AG04450 (cell line): ENCODE measurements at regions of chr7 and their contacts with region 1.

Region 1: GRCh38 chr7:22103255-22103969 is 157.7 kb upstream of the CDCA7L start:
- DNase-seq: peak; percentile 39
- H3K4me3 ChIP-seq: no peak overlapping the region
- H3K27ac ChIP-seq: no peak overlapping the region
- H3K27me3 ChIP-seq: peaks cover 9% of the 10 kb centered on the region
- CTCF ChIP-seq: peak; percentile 91

Region 2: GRCh38 chr7:22001345-22002004 is 101.9 kb before region 1 on chr7:
- CTCF ChIA-PET with region 1: no interaction called
- POLR2A ChIA-PET with region 1: no interaction called
- DNase-seq: peak; percentile 16
- H3K4me3 ChIP-seq: no peak overlapping the region
- H3K27ac ChIP-seq: no peak overlapping the region
- H3K27me3 ChIP-seq: peaks cover 2% of the 10 kb centered on the region
- CTCF ChIP-seq: peak; percentile 83

Region 3: DNA sequence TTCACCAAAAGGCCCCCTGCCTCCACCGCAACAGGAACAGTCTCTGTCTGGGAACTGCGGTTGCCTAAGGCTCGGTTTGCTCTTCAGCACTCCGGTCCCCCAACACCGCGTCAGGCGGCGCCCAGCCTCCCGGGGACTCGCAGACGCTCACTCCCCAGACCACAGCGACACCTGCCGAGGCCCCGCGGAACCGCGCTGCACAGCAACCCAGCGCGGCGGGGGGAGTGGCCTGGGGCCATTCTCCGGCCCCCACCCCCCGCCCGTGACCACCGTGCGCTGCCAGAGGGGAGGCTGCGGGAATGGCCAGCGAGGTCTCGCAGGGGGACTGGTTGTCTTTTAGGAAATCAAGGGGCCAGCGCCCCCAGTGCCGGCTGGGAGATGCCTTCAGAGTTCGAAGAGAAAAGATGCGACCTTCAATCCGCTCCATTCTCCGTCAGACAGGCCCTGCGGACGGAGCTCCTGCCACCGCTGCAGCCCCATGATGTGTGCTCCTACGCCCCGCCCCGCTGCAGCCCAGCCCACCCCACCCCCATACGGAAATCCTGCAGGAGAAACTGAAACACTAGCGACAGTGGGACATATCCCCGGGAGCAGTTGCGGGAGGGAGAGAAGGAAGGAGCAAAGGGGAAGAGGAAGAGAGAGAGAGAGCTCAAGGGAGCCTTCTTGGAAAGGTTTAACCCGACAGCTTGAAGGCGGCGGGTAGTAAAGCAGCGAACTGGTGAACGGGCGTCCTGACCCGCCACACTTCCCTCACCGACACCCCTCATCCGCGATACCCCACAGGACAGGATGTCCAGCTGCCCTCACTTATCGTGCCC is 20.3 kb before region 1 on chr7:
- CTCF ChIA-PET with region 1: interaction called, 33 read pairs
- POLR2A ChIA-PET with region 1: no interaction called
- DNase-seq: peak; percentile 44
- H3K4me3 ChIP-seq: peak overlapping the region; percentile 86
- H3K27ac ChIP-seq: peak overlapping the region; percentile 75
- H3K27me3 ChIP-seq: peaks cover 8% of the 10 kb centered on the region
- CTCF ChIP-seq: peak; percentile 92

Region 4: DNA sequence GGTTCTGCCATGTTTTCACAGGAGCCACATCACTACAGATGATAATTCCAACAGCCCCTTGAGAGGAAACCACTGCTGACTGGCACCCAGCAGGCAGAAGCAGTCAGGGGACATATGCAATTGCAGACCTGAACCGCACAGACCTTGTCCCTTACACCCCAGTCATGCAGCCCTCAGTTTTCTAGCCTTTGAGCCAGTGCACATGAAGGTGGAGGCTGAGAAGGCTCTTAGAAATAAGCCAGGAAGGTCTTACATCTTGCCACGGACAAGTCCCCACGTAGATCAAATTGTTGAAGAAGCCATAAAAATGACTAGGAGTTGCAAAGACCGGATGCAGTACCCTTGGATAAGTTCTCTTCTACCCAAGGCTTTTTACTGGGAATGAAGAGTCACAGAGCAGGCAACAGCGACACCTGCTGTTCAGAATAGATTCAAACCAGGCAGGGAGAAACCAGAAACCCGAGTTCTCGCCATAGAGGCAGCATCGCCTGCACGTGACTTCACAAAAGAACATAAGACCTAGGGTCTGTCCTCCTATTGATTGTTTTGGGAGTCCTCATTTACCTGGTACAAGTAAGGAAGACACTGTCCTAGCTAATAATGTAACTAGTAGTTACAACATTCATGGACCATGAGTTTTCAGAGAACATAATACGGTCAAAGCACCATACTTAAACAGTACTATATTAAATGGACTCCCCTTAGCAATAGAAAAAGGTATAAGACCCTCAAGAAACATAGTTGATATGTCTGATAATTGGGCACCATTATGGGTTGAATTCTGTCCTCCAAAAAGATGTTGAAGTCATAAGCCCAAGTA is 385.4 kb after region 1 on chr7:
- CTCF ChIA-PET with region 1: interaction called, 86 read pairs
- POLR2A ChIA-PET with region 1: interaction called, 3 read pairs
- DNase-seq: peak; percentile 45
- H3K4me3 ChIP-seq: no peak overlapping the region
- H3K27ac ChIP-seq: no peak overlapping the region
- H3K27me3 ChIP-seq: no peaks in the 10 kb centered on the region
- CTCF ChIP-seq: peak; percentile 95

Region 5: DNA sequence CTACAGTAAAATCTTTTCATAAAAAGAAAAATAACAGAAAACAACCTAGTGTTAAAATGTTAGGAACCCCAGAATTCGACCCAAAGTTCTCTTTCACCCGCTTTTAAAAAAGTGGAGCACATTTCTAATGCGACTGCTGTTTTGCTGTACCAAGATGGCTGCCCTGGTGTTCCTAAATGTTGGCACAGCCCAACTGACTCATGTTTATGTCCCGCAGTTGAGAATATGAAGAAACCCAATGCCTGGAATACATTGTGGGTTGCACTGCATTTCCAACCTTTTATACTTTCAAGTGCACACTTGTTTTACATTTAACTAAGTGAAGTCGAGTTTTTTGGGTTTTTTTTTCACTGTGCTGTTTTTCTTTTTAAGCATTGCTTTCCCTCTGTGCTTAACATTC is 395.6 kb after region 1 on chr7:
- CTCF ChIA-PET with region 1: interaction called, 13 read pairs
- POLR2A ChIA-PET with region 1: no interaction called
- DNase-seq: no peak
- H3K4me3 ChIP-seq: peak overlapping the region; percentile 29
- H3K27ac ChIP-seq: no peak overlapping the region
- H3K27me3 ChIP-seq: no peaks in the 10 kb centered on the region
- CTCF ChIP-seq: no peak